Activated CD4-positive, alpha-beta T cell treated with anti-CD3 and anti-CD28 coated beads, Interleukin-2, amount 10 ng/mL, durations not matched to agents 24 days and 14 days (primary cell): ENCODE measurements at regions of chr18 and their contacts with region 1.

Region 1: DNA sequence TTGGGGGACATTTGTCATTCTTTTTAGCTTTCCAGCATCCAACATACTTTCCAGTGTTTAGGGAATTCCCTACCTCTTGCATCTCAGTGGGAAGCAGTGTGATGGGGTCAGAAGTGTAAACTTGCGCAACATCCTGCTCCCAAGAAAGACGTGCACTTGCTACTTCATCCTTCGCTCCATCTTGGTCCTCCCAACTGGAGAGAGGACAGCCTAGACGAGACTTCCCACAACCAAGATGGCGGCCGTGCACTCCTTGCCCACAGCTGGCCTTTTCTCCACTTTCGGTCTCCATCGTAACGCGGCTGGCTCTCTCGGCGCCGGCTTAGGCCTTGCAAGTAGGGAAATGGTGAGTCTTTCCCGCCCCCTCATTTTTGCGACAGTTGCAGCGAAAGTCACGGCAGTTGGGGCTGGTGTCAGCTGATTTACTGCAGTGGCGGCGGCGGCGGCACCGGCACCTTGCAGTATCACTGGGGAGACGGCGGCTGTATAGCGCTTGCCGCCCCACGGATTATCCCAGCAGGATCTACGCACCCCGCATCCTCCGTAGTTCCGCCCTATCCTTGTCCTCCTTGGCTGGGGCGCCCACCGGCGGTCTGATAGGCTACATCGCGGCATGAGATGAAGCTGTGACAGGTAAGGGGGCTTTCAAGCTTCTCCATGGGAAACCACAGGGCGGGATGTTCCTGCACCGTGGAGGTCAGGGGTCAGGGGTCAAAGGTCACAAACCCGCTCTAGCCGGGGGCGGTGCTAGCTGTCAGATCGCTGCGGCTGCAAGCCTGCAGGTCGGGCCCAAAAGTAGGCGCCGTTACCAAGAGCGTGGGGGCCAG is at the start of gene WDR7:
- DNase-seq: peak; percentile 98
- H3K4me3 Mint-ChIP-seq: peak within 1 kb of the TSS; percentile 96
- H3K27ac Mint-ChIP-seq: peak within 1 kb of the TSS; percentile 96
- H3K4me1 Mint-ChIP-seq: peaks cover 52% of the 10 kb centered on the region
- H3K27me3 Mint-ChIP-seq: peaks cover 2% of the 10 kb centered on the region
- total RNA-seq, gene WDR7: 20.8 and 26.0 TPM in 2 replicates

Region 2: DNA sequence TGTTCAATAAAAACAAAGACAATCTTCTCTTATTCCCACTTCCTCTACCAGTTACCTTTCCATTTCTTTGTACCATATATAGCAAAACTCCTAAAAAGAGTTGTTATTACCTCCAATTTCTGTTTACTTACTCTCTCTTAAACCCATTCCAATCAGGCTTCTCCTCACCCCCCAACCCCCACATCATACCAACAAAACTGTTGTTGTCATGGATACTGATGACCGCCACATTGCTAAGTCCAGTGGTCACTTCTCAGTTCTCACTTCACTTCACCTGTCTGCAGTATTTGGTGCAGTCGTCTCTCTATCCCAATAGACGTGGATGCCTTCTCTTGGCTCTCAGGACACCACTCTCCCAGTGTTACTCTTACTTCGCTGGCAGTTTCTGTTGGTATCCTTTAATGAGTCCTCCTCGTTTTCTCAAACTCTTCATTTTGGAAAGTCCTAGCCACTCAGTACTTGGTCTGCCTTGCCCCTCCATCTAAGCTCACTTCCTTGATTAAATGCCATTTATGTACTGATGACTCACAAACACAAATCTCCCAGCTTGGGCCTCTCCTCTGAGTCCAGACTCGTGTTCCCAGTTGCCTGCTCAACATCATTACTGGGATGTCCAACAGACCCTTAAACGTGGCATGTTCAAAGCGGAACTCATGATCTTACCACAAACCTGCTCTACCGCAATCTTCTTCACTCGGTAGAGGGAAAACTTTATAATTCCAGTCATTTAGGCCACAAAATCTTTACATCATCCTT is 1678.3 kb before region 1 on chr18:
- intact Hi-C with region 1: no loop called
- DNase-seq: no peak
- H3K4me3 Mint-ChIP-seq: no peak overlapping the region
- H3K27ac Mint-ChIP-seq: no peak overlapping the region
- H3K4me1 Mint-ChIP-seq: no peaks in the 10 kb centered on the region
- H3K27me3 Mint-ChIP-seq: peaks cover 2% of the 10 kb centered on the region

Region 3: DNA sequence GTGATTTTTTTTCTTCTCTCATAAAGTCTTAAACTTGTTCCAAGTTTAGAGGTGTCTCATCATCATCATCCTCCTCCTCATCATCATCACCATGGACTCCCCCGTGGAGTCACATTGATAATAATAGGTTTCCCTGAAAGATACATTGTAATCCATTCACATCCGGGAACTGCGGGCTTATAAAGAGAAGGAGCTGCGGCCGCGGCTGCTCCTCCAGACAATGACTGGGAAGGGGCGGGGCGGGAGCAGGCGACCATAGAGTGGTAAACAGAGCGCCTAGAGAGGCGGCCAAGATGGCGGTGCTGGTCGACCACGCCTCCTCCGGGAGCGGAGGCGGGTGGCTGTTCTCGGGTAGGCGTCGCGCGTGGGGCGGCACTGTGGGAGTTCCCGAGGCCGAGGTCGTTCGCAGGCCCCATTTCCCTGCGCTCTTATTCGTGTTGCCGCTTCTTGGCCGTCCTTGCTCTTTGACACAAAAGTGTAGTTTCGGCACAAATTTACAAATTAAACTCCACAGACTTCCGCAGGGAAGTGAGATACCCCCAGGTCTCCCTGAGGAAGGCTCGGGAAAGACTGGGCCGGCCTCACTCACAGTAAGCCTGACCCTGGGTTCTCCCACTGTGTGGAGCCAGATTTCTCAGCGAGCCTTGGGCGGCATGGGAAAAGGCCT is 1061.4 kb before region 1 on chr18:
- intact Hi-C with region 1: loop called (anchors 5 kb)
- DNase-seq: peak; percentile 96
- H3K4me3 Mint-ChIP-seq: peak overlapping the region; percentile 86
- H3K27ac Mint-ChIP-seq: peak overlapping the region; percentile 83
- H3K4me1 Mint-ChIP-seq: peaks cover 21% of the 10 kb centered on the region
- H3K27me3 Mint-ChIP-seq: peaks cover 30% of the 10 kb centered on the region

Region 4: DNA sequence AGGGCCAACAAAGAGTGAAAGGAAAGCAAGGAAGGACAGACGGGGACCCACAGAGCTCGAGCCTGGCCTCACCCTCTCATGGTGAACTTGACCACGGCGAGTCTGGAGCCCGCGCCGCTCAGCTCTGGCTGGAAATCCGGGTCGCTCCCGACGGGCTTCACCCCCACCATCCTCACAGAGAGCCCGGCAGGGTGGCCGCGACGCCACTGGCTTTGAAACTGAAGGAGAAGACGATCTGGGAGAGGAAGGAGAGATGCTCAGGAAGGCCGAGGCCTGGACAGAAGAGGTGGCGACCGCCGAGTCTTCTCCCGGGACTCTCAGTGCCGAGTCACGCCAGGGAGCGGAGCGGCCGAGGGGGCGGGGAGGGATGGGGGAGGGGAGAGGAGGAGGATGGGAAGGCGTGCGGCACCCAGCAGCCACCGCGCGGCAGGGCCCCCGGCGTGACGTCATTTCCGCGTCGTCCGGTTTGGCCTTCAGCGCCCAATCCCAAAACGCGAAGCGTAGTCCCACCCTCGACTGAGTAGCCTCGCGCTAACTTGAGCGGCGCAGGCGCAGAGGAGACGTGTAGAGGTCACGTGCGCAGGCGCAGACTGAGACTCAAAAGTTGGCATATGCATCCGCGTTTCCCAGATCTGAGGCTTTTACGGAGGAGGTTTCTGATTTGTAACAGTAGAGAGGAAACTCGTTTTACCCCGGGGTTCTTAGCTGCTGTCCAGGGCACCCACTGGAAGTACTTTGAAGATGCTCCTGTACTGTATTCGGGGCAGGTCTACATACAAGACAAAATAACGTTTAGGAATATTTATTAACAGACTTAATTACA is 12.7 kb before region 1 on chr18 and contains the start of gene TXNL1:
- intact Hi-C with region 1: loop called (anchors 1 kb)
- DNase-seq: peak; percentile 100
- H3K4me3 Mint-ChIP-seq: peak within 1 kb of the TSS; percentile 98
- H3K27ac Mint-ChIP-seq: peak within 1 kb of the TSS; percentile 96
- H3K4me1 Mint-ChIP-seq: peaks cover 36% of the 10 kb centered on the region
- H3K27me3 Mint-ChIP-seq: no peaks in the 10 kb centered on the region
- total RNA-seq, gene TXNL1: 102 and 104 TPM in 2 replicates

Region 5: GRCh38 chr18:56696966-56697365 is 45.8 kb after region 1 on chr18:
- intact Hi-C with region 1: no loop called
- DNase-seq: no peak
- H3K4me3 Mint-ChIP-seq: no peak overlapping the region
- H3K27ac Mint-ChIP-seq: no peak overlapping the region
- H3K4me1 Mint-ChIP-seq: no peaks in the 10 kb centered on the region
- H3K27me3 Mint-ChIP-seq: no peaks in the 10 kb centered on the region

Region 6: DNA sequence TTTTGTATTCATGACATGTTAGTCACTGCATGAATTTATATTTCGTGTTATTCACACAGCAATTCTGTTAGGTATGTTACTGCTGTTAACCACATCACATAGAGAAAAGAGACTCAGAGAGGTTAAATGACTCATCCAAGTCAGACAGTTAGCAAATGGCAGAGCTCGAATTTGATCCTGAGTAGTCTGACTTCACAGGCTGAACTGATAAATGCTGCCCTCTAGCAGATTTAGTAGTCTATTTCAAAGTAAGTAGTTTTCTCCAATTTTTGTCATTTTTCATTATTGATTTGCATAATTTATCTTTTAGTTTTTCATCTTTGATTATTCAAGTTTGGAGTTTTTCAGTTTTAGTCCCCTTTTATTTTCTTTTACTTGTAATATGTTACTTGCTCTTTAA is 58.3 kb after region 1 on chr18:
- intact Hi-C with region 1: loop called (anchors 2 kb)
- DNase-seq: peak; percentile 84
- H3K4me3 Mint-ChIP-seq: no peak overlapping the region
- H3K27ac Mint-ChIP-seq: no peak overlapping the region
- H3K4me1 Mint-ChIP-seq: peaks cover 11% of the 10 kb centered on the region
- H3K27me3 Mint-ChIP-seq: no peaks in the 10 kb centered on the region

Region 7: DNA sequence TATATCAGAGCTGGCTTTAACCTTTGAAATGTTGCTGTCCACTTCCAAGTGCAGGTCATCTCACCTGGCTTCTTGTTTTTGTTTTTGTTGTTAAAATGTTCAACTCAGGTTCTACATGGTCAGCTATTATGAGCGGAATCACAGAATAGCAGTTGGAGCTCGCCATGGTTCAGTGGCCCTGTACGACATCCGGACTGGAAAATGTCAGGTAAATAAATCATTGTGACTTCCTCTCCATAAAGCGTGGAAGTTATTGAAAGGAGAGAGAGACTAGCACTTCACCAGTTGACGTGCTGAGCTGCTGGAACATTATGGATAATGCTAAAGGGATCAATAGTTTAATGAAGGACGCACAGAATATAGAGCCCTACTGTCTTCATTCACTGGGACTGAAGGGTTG is 311.2 kb after region 1 on chr18:
- intact Hi-C with region 1: no loop called
- DNase-seq: no peak
- H3K4me3 Mint-ChIP-seq: no peak overlapping the region
- H3K27ac Mint-ChIP-seq: no peak overlapping the region
- H3K4me1 Mint-ChIP-seq: no peaks in the 10 kb centered on the region
- H3K27me3 Mint-ChIP-seq: no peaks in the 10 kb centered on the region

Region 8: DNA sequence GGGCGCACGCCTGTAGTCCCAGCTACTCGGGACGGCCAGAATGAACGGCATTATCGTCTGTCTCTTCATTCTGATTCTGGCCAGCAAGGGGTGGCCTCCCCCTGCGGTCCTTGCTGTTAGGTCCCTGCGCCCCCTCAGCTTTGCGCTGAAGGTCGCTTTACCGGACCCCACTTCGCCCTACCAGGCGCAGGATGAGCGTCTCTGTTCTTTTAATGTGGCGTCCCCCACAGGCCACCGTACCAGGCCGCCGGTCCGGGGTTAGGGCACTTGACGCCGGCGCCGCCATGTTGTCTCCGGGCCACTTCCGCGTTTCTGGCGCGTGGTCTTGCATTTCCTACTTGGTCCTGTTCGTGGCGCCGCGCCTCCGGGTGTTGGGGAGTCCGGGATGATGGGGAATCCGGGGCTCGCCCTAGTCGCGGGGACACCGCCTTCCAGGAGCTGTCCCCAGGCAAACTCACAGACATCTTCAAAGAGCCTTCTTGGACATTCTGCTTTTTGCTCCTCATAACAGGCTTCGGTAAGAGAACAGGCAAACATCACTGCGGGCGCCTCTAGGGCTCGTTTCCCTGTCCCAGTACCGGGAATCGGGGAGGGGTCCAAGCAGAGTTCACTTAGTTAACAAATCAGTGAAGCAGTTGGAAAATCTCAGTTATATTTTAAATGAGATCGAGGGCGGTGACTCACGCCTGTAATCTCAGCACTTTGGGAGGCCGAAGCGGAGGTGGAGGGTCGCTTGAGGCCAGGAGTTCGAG is 979.0 kb after region 1 on chr18:
- intact Hi-C with region 1: loop called (anchors 2 kb)
- DNase-seq: peak; percentile 98
- H3K4me3 Mint-ChIP-seq: peak overlapping the region; percentile 98
- H3K27ac Mint-ChIP-seq: peak overlapping the region; percentile 94
- H3K4me1 Mint-ChIP-seq: peaks cover 14% of the 10 kb centered on the region
- H3K27me3 Mint-ChIP-seq: no peaks in the 10 kb centered on the region